SK-N-SH (cell line): ENCODE measurements at regions of chr17 and their contacts with region 1.

Region 1: GRCh38 chr17:17890773-17891759 is 54.3 kb upstream of the SREBF1 start:
- DNase-seq: peak; percentile 71
- H3K4me3 ChIP-seq: no peak overlapping the region
- H3K27ac ChIP-seq: peak overlapping the region in 1 of 2 experiments; percentile 43; a peak in 1 of 4 replicates
- H3K4me1 ChIP-seq: peaks cover 0 to 31% of the 10 kb centered on the region in 2 experiments; a peak in 1 of 4 replicates
- H3K27me3 ChIP-seq: no peaks in the 10 kb centered on the region
- CTCF ChIP-seq: peak; percentile 79
- EP300 ChIP-seq: no peak
- RAD21 ChIP-seq: peak; percentile 94

Region 2: GRCh38 chr17:17839791-17840707 is 51.0 kb before region 1 on chr17:
- CTCF ChIA-PET with region 1: no interaction called
- POLR2A ChIA-PET with region 1: no interaction called
- DNase-seq: peak; percentile 96
- H3K4me3 ChIP-seq: peak overlapping the region; percentile 50 to 60; a peak in 3 of 4 replicates
- H3K27ac ChIP-seq: peak overlapping the region; percentile 88 to 98
- H3K4me1 ChIP-seq: peaks cover 22 to 77% of the 10 kb centered on the region in 2 experiments; a peak in 3 of 4 replicates
- H3K27me3 ChIP-seq: no peaks in the 10 kb centered on the region
- CTCF ChIP-seq: no peak
- EP300 ChIP-seq: no peak; a peak in 1 of 4 replicates
- RAD21 ChIP-seq: no peak

Region 3: DNA sequence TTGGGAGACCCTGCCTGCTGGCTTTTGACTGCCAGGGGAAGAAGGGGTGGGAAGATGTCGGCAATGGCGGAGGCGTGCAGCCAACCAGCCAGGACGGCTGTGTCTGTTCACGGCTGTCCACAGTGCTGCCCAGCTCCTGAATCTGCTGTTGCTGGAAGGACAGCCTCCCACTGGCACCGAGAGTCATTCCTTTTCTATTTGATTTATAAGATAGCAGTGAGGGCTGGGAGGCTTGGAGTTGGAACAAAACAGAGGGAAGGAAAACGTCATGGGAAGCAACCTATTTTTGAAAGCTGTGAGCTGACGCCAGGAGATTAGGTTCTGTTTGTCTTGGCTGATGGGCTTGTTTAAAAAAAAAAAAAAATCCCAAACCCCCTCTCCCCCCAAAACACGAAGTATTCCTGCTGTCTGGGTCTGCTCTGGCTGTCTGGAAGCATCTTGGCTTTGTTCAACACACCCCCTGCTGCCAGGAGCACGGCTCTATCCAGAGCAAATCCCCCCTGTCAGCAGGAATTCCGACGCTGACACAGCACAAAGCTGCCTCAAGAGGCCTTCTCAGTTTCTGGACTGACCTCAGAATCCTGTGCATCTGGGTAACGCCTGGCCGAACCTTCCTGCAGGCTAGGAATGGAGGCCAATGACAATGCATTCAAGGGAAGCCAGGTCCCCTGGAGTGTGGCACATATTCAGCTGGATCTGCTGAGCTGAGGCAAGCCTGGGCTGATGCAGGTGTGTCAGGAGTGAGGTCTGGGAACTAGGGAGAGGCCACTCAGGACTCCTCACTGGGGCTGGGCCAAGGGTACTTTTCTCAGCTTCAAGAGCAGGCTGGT is 13.3 kb before region 1 on chr17:
- CTCF ChIA-PET with region 1: interaction called, 24 read pairs
- POLR2A ChIA-PET with region 1: no interaction called
- DNase-seq: peak; percentile 74
- H3K4me3 ChIP-seq: 0 out of 4 replicates have a peak overlapping the region, but pooled peaks of 1 of the 2 experiments have one; percentile 9
- H3K27ac ChIP-seq: peak overlapping the region; percentile 84 to 99
- H3K4me1 ChIP-seq: peaks cover 15 to 55% of the 10 kb centered on the region in 2 experiments
- H3K27me3 ChIP-seq: no peaks in the 10 kb centered on the region
- CTCF ChIP-seq: 0 out of 2 replicates have a peak, but pooled peaks have one; percentile 21
- EP300 ChIP-seq: no peak; a peak in 1 of 4 replicates
- RAD21 ChIP-seq: peak; percentile 20

Region 4: DNA sequence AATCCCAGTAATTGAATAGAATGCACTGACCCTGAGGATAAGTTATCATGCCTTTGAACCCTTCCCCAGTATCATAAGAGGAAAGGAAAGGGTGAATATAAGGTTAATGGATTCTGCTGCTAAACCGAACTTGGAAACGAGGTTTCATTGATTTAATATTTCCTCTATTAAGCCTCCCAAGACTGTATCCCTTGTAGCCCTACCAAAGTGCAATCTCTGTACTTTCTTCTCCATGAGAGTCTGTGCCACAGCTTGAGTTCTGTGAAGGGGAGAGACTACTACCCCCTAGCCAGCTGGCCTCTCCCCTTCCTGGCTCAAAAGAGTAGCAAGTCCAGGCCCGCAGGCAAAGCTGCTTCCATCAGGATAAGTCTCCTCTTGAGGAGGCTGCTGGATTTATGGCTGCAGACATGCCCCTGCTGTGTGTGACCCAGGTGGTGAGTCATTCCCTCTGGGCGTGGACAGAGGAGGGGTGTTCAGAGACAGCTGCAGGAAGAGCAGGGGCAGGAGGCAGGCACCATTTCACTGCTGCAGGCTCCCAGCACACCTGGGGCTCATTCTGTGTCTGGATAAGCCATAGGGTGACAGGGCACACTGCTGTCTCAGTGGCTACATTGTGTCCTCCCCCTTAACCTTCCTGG is 22.7 kb after region 1 on chr17:
- CTCF ChIA-PET with region 1: interaction called, 158 read pairs
- POLR2A ChIA-PET with region 1: interaction called, 4 read pairs
- DNase-seq: peak; percentile 74
- H3K4me3 ChIP-seq: peak overlapping the region in 1 of 2 experiments; percentile 6; a peak in 1 of 4 replicates
- H3K27ac ChIP-seq: peak overlapping the region; percentile 70 to 91
- H3K4me1 ChIP-seq: peaks cover 14 to 29% of the 10 kb centered on the region in 2 experiments
- H3K27me3 ChIP-seq: no peaks in the 10 kb centered on the region
- CTCF ChIP-seq: no peak
- EP300 ChIP-seq: peak; percentile 44; a peak in 3 of 4 replicates
- RAD21 ChIP-seq: peak; percentile 1; the same call in 1 of the 2 replicates

Region 5: DNA sequence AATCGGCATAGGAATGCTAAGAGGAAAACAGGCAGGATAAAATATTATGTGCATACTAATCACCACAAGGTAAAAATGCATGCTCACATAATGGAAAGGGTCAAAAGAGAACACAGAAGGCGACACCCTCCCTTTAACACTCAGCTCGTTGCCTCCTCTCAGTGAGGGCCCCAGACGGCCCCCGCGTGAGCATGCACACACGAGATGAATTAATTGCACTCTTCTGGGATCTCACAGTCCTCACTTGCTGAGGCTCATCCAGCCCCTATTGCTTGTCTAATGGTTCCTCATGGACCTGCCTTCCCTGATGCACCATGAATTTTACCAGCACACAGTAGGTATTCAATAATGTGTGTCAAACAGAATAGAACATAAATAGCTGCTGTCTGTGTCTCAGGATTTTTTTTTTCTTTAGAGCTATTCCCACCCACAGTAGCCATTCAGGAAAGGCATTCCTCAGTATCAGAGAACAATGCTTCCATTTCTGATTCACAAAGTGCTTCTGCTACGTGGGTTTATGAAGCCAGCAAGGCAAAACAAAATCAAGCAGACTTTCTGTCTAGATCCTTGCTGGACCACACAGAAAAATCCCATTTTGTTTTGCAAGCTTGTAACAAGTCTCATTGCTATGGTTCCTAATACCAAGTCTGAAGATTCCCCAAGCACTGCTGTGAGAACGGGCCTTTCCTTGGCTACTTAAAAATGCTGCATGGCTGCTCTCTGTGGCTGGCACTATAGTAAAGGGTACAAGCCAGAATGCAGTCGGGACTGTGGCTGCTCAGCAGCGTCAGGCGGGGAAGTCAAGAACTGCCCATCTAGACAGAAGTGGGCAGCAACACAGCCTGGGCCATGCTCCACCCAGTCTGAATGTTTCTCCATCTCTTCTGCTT is 37.6 kb after region 1 on chr17:
- CTCF ChIA-PET with region 1: interaction called, 11 read pairs
- POLR2A ChIA-PET with region 1: no interaction called
- DNase-seq: no peak
- H3K4me3 ChIP-seq: no peak overlapping the region
- H3K27ac ChIP-seq: peak overlapping the region in 1 of 2 experiments; percentile 49; a peak in 2 of 4 replicates
- H3K4me1 ChIP-seq: peaks cover 3 to 29% of the 10 kb centered on the region in 2 experiments
- H3K27me3 ChIP-seq: no peaks in the 10 kb centered on the region
- CTCF ChIP-seq: no peak
- EP300 ChIP-seq: no peak
- RAD21 ChIP-seq: no peak